Ascending aorta (tissue), 2 donors: ENCODE measurements at regions of chr3 and their contacts with region 1.

Region 1: GRCh38 chr3:170079536-170080165 is 41.9 kb downstream of the GPR160 start:
- DNase-seq: no peak
- H3K4me3 ChIP-seq: no peak overlapping the region
- H3K27ac ChIP-seq: no peak overlapping the region
- H3K4me1 ChIP-seq: no peaks in the 10 kb centered on the region
- H3K27me3 ChIP-seq: no peaks in the 10 kb centered on the region
- CTCF ChIP-seq: no peak

Region 2: DNA sequence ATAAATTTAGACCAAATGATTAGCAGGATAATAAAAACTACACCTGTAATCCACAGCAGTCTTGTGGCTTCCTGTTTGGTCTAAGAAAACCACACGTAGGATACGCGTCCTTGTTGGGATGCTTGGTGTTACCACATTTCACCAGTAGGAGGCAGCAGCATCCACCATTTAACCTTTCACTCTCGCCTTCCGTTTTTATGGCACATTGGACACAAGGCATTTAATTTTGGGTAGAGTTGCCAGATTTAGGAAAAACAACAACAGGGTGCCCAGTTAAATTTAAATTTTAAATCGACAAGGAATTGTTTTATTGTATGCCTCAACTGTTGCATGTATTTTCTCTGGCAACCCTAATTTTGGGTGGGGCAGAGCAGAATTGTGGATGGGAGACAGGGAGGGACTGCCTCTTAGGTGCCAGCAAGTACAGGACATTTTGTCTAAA is 216.2 kb before region 1 on chr3:
- intact Hi-C with region 1: loop called (anchors 10 kb)
- DNase-seq: peak in 1 of 2 donors; percentile 74
- H3K4me3 ChIP-seq: no peak overlapping the region
- H3K27ac ChIP-seq: no peak overlapping the region
- H3K4me1 ChIP-seq: no peaks in the 10 kb centered on the region
- H3K27me3 ChIP-seq: no peaks in the 10 kb centered on the region
- CTCF ChIP-seq: peak; percentile 75 to 90 (median 80)